Calu3 (cell line): ENCODE measurements at regions of chr11 and their contacts with region 1.

Region 1: DNA sequence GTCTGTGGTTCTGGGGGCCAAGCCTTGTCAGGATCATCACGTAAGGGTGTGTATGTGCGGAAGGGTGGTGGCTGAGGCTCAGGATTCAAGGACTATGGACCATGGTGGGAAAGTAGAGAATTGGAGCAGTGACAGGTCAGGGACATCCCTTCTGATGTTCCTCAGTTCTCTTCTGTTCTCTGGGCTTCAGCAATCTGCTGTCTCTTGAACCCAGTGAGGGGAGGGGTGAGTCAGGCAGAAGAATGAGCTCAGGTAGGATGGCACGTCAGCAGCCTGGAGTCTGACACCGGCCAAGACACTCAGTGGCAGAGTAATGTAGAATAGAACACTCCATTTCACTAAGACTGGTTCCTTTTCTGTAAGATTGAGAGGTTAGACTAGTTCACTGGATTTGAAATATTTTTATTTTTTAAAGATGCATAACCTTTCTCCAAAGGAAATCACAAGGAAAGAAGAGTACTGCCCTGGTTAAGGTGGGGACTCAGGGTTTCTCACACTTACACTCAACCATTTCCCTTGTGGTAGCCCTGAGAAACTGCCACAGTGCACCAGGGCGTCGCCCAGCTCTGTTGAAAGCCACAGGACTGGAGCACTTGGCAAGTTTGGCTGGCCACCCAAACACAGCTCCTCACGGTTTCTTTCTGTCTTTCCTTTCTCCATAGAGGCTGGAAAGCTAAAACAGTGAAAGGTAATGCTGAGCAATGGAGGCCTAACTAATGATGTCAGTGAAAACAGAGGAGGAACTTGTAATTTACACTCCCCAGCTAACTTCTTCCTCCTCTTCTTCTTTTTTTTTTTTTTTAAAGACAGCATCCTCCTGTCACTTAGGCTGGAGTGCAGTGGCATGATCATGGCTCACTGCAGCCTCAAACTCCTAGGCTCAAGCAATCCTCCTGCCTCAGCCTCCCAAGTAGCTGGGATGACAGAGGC is 23.1 kb upstream of the MICAL2 start:
- DNase-seq: peak; percentile 55
- H3K4me3 Mint-ChIP-seq: peak overlapping the region; percentile 21
- H3K27ac Mint-ChIP-seq: peak overlapping the region; percentile 99
- H3K4me1 Mint-ChIP-seq: peaks cover 75% of the 10 kb centered on the region
- H3K27me3 Mint-ChIP-seq: no peaks in the 10 kb centered on the region
- CTCF ChIP-seq: no peak

Region 2: DNA sequence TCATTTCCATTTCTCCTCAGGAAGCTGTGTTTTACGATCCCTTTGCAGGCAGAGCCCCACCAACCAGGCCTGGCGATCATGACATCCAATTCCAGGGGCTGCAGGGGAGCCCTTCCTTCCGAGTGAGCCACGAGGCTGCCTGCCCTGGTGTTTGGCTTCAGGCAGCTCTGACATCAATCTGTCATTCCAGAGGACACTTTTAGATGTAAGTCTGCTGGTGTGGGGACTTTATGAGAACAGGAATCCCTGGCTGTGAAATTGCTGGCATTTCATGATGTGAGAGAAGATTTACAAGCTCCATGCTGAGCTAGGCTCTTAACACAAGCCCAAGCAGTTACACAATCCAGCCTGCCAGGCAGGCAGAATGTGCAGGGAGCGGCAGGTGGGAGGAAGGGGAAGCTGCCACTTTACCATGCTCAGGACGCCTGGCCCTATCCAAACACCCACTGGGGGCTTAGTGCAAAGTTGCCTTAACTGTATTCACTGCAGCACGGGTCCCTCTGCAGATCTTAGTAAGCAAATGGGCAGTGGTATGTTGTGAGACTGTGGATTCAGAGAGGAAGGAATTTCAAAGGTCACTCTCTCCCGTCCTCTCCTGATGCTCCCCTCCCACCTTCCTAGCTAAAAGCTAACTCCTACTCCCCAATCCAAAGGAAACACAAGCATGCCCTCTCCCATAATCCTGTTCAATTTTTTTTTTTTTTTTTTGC is 20.4 kb before region 1 on chr11:
- CTCF ChIA-PET with region 1: interaction called, 22 read pairs
- intact Hi-C with region 1: loop called (anchors 2 kb)
- DNase-seq: peak; percentile 31
- H3K4me3 Mint-ChIP-seq: peak overlapping the region; percentile 31
- H3K27ac Mint-ChIP-seq: peak overlapping the region; percentile 85
- H3K4me1 Mint-ChIP-seq: peaks cover 51% of the 10 kb centered on the region
- H3K27me3 Mint-ChIP-seq: no peaks in the 10 kb centered on the region
- CTCF ChIP-seq: no peak

Region 3: DNA sequence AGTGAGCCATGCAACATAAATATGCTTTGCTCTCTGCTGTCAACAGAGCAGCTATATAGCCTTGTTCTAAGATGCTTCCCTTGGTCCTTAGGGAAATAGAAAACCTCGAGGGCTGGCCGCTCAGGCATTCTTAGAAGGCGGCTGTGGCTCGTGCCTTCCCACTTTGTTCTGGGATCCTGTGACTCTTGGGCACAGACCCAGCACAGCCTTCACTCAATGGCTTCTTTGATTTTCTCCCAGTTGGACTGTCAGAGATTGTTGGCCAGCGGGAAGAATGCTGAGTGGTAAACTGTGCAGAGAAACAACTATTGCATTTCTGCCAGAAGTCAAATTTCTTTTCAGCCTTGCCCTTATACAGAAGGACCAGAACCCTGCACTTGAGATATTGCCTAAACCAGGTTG is 13.5 kb after region 1 on chr11:
- CTCF ChIA-PET with region 1: interaction called, 10 read pairs
- intact Hi-C with region 1: no loop called
- DNase-seq: no peak
- H3K4me3 Mint-ChIP-seq: no peak overlapping the region
- H3K27ac Mint-ChIP-seq: no peak overlapping the region
- H3K4me1 Mint-ChIP-seq: peaks cover 24% of the 10 kb centered on the region
- H3K27me3 Mint-ChIP-seq: no peaks in the 10 kb centered on the region
- CTCF ChIP-seq: no peak

Region 4: GRCh38 chr11:12110201-12110713 is 22.9 kb after region 1 on chr11 and contains the start of gene MICAL2:
- CTCF ChIA-PET with region 1: interaction called, 10 read pairs
- intact Hi-C with region 1: loop called (anchors 2 kb)
- DNase-seq: peak; percentile 95
- H3K4me3 Mint-ChIP-seq: peak within 1 kb of the TSS; percentile 85
- H3K27ac Mint-ChIP-seq: peak within 1 kb of the TSS; percentile 77
- H3K4me1 Mint-ChIP-seq: peaks cover 47% of the 10 kb centered on the region
- H3K27me3 Mint-ChIP-seq: no peaks in the 10 kb centered on the region
- CTCF ChIP-seq: no peak
- total RNA-seq, gene MICAL2: 191 and 202 TPM in 2 replicates

Region 5: DNA sequence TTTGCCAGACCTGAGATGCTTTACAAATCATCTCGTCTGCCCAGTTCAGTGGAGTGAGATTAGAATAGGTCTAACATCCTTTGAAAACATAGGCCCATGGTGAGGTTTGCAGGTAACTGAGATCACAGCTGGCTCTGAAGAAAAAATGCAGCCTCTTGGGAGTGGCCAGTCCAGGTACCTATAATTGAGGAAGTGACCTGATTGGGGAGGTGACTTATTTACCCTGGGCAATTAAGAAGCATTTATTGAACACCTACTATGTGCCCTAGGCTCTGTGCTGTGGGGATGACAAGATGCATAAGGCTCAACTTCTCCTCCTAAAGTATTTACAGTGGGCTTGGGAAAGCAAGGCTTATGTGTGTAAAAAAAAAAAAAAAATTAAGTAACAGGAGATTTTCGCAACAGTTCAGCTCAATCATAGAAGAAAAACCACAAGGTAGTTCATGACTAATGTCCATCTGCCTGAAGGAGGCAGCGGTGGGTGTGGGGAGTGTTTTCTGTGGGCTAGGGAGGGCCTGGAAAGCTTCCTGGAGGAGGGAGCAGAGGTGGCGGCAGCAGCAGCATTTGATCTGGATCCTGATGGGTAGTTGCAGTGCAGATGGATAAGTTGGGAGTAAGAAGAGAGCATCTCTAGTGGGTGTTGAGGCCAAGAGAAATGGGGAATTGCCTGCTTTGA is 39.1 kb after region 1 on chr11:
- CTCF ChIA-PET with region 1: interaction called, 10 read pairs
- intact Hi-C with region 1: no loop called
- DNase-seq: peak; percentile 61
- H3K4me3 Mint-ChIP-seq: peak overlapping the region; percentile 8
- H3K27ac Mint-ChIP-seq: peak overlapping the region; percentile 90
- H3K4me1 Mint-ChIP-seq: peaks cover 61% of the 10 kb centered on the region
- H3K27me3 Mint-ChIP-seq: no peaks in the 10 kb centered on the region
- CTCF ChIP-seq: no peak

Region 6: GRCh38 chr11:12167098-12168000 is 80.0 kb after region 1 on chr11:
- CTCF ChIA-PET with region 1: interaction called, 11 read pairs
- intact Hi-C with region 1: loop called (anchors 5 kb)
- DNase-seq: peak; percentile 71
- H3K4me3 Mint-ChIP-seq: peak overlapping the region; percentile 25
- H3K27ac Mint-ChIP-seq: peak overlapping the region; percentile 95
- H3K4me1 Mint-ChIP-seq: peaks cover 79% of the 10 kb centered on the region
- H3K27me3 Mint-ChIP-seq: no peaks in the 10 kb centered on the region
- CTCF ChIP-seq: no peak

Region 7: DNA sequence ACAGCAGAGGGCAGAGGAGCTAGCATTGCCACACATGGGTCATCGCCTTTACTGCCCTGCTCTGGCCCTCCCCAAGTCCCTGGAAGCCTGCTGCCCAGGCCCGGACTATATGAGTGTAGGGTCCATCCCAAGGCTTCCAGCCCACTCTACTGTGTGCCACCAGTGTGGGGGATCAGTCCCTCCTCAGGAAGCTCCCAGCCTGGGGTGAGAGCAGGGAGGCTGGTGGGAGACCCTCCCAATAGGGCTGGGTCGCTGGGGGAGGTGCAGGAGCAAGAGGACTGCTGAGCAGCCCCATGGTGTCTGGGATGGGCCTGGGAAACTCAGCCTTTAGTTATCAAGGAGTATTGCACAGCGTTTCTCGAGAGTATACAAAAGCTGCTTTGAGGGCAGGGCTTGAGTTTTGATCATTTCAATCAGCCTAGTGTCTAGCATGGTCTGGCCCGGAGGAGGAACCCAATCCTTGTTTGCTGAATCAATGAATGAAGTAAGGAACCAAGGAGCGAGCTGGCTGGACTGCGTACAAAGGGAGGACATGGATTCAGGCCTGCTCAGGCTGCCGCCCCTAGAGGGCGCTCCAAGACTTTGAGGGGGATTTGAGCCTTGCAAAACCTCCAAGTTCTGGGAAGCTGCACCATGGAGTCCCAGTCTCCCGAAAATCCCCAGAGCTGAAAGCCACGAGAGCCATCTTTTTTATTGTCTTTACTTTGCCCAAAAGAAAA is 201.0 kb after region 1 on chr11:
- CTCF ChIA-PET with region 1: interaction called, 10 read pairs
- intact Hi-C with region 1: no loop called
- DNase-seq: peak; percentile 88
- H3K4me3 Mint-ChIP-seq: peak overlapping the region; percentile 29
- H3K27ac Mint-ChIP-seq: peak overlapping the region; percentile 85
- H3K4me1 Mint-ChIP-seq: peaks cover 42% of the 10 kb centered on the region
- H3K27me3 Mint-ChIP-seq: no peaks in the 10 kb centered on the region
- CTCF ChIP-seq: peak; percentile 92